ENCODE measurements at regions of chr1 and their contacts with region 1.

Region 1: GRCh38 chr1:52127181-52128180 is 14.4 kb upstream of the ZFYVE9 start:
- DNase-seq: no peak
- ATAC-seq: peak; percentile 76 to 84
- H3K4me3 ChIP-seq: no peak overlapping the region
- H3K27ac ChIP-seq: no peak overlapping the region
- H3K4me1 ChIP-seq: no peaks in the 10 kb centered on the region
- H3K27me3 ChIP-seq: peaks cover 7% of the 10 kb centered on the region
- CTCF ChIP-seq: peak; percentile 75

Region 2: GRCh38 chr1:51877434-51878306 is 249.8 kb before region 1 on chr1:
- intact Hi-C with region 1: no loop called
- DNase-seq: no peak
- ATAC-seq: peak; percentile 10 to 36
- H3K4me3 ChIP-seq: peak overlapping the region; percentile 86
- H3K27ac ChIP-seq: peak overlapping the region; percentile 94
- H3K4me1 ChIP-seq: peaks cover 36% of the 10 kb centered on the region
- H3K27me3 ChIP-seq: peaks cover 7% of the 10 kb centered on the region
- CTCF ChIP-seq: no peak

Region 3: DNA sequence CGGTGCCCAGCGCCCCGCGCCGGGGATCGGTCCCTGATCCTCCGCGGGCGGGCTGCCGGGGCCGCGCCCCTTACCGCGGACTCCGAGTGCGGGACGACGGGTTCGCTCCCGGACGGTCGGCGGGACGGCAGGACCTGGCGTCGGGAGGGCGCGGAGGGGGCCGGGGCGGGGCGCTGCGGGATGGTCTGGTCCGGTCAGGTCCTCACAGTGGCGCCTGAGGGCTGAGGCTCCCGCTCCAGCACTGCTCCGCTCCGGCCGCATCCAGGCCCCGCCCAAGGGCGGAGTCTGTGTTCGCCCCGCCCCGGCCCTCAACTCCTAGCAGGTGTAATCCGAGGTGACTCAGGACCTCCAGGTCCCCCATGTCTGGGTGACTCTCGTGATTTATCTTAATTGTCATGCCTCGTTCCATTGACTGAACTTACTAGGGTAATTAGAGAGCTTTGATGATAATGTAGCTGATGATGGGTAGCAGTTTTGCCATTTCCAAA is 137.0 kb before region 1 on chr1 and contains the start of gene RAB3B:
- intact Hi-C with region 1: no loop called
- DNase-seq: peak; percentile 68
- ATAC-seq: peak; percentile 89 to 91
- H3K4me3 ChIP-seq: peak within 1 kb of the TSS; percentile 49
- H3K27ac ChIP-seq: no peak within 1 kb of the TSS
- H3K4me1 ChIP-seq: no peaks in the 10 kb centered on the region
- H3K27me3 ChIP-seq: peaks cover 60% of the 10 kb centered on the region
- CTCF ChIP-seq: no peak
- total RNA-seq, gene RAB3B: 0.06 TPM

Region 4: GRCh38 chr1:52296345-52296744 is 168.9 kb after region 1 on chr1:
- intact Hi-C with region 1: loop called (anchors 10 kb)
- DNase-seq: no peak
- ATAC-seq: peak; percentile 87 to 88
- H3K4me3 ChIP-seq: no peak overlapping the region
- H3K27ac ChIP-seq: no peak overlapping the region
- H3K4me1 ChIP-seq: no peaks in the 10 kb centered on the region
- H3K27me3 ChIP-seq: no peaks in the 10 kb centered on the region
- CTCF ChIP-seq: peak; percentile 71

Measured in lower lobe of right lung (tissue), 2 donors.